BJ (cell line): ENCODE measurements at regions of chr5 and their contacts with region 1.

Region 1: DNA sequence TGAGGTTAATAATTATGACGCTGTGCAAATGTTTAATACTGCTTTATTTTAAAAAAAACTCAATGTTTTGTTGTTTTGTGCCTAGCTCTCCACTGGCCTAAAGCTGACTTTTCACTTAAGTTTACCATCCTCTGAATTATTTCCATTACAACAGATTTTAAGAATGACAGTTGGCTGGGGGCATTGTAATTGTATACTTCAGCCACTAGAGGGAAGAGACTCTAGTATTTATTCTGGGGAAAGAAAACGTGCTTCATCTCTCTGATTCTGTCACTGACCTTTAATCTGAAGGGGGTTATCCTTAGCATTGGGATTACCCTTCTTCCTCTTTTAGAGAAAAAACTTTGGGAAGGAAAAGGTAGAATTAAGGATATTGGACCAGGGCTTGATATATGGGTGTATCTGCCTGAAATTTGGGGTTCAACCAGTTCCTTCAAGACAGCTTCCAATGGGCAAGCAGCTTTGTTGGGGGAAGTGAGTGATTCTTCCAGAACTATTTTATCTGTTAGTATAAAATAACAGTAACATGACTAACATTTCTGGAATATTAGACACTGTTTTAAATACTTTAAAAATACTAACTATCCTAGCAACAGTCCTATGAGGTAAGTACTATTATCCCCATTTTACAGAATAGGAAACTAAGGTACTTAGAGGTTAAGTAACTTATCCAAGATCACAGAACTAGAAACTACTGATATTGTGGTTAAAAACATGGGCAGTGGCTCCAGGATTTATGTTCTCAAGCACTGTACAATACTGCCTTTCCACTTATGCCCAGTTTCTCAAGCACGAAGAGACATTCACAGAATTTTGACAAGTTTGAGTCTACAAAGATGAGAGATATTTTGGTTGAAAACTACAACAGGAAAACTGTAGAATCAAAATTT is 208.4 kb downstream of the CD180 start:
- DNase-seq: no peak
- H3K4me3 ChIP-seq: no peak overlapping the region
- H3K27me3 ChIP-seq: no peaks in the 10 kb centered on the region
- CTCF ChIP-seq: peak; percentile 79

Region 2: GRCh38 chr5:66821688-66822429 is 166.3 kb before region 1 on chr5:
- CTCF ChIA-PET with region 1: no interaction called
- POLR2A ChIA-PET with region 1: no interaction called
- DNase-seq: no peak
- H3K4me3 ChIP-seq: no peak overlapping the region
- H3K27me3 ChIP-seq: peaks cover 9% of the 10 kb centered on the region
- CTCF ChIP-seq: no peak

Region 3: DNA sequence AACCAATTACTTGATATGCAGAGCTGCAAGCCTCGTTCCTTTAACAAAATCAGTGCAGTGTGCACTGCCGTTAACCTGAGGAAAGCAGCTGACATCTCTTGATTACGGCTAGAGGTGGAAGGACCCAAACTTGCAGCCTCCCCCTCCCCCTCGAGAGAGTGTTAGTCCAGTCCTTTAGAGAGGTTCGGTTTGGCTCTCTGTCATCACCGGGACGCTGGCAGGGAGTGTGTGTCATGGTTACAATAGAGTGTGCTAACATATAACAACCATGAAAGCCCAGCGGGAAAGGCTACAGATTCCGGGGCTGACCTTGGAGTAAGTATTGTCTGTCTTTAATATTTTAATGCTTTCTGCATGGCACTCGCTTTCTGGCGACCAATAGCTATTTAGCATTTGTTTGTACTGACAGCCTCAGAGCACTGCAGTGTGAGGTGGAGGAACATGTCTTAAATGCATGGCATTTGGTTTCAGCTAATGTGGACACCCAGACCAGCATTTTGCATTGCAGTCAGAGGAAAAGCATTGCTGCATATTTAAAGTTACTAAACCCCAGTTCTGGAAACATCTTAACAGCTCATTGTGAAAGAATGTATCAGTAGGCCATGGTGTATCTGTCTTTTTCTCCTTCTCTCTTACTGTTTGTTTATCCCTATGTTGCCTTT is 29.1 kb before region 1 on chr5:
- CTCF ChIA-PET with region 1: interaction called, 12 read pairs
- POLR2A ChIA-PET with region 1: interaction called, 3 read pairs
- DNase-seq: no peak
- H3K4me3 ChIP-seq: peak overlapping the region; percentile 50
- H3K27me3 ChIP-seq: no peaks in the 10 kb centered on the region
- CTCF ChIP-seq: no peak

Region 4: DNA sequence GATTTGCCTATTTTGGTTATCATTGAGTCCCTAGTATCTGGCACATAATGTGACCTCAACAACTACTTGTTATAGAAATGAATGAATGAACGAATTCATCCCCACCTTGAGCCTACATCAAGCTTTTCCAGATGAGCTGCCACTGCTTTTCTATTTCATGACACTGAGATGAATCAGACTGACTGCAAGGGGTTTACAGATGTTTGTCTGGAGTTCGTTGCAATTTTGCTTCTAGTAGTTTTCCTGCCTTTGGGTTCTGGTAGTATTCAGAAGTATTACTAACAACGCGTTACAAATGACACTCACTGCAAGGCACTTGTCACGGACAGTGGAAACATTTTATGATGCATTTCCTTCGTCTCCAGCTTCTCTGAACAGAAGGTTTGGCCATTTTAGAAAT is 13.9 kb before region 1 on chr5:
- CTCF ChIA-PET with region 1: interaction called, 26 read pairs
- POLR2A ChIA-PET with region 1: no interaction called
- DNase-seq: no peak
- H3K4me3 ChIP-seq: no peak overlapping the region
- H3K27me3 ChIP-seq: no peaks in the 10 kb centered on the region
- CTCF ChIP-seq: no peak

Region 5: GRCh38 chr5:67002812-67003684 is 14.9 kb after region 1 on chr5:
- CTCF ChIA-PET with region 1: interaction called, 12 read pairs
- POLR2A ChIA-PET with region 1: no interaction called
- DNase-seq: no peak
- H3K4me3 ChIP-seq: no peak overlapping the region
- H3K27me3 ChIP-seq: peaks cover 3% of the 10 kb centered on the region
- CTCF ChIP-seq: no peak

Region 6: DNA sequence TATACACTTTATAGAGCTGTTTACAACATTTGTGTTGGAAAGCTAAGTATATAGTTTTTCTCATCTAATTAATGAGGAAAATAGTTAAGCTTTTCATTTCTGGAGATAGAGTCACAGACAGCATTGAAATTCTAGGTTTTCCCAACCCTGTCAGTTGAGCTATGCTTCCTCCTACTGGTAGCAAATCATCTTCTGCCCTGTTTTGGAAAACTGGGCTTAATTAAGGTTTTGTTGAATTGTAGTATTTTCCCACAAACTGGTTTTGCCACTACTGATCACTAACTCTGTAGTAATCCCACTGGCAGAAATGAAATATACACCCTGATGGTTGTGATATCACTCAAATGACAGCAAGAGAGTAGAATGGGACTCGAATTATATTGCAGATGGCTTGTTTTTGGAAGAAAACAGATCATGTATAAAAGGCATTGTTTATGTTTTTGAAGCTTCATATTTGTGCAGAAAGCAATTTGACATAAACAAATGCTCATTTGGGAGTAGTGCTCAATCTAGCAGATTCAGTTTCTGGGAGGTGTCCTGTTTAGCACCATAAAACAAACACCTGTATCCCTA is 161.8 kb after region 1 on chr5:
- CTCF ChIA-PET with region 1: interaction called, 24 read pairs
- POLR2A ChIA-PET with region 1: no interaction called
- DNase-seq: no peak
- H3K4me3 ChIP-seq: no peak overlapping the region
- H3K27me3 ChIP-seq: no peaks in the 10 kb centered on the region
- CTCF ChIP-seq: peak; percentile 68

Region 7: GRCh38 chr5:68149189-68149588 is 1161.0 kb after region 1 on chr5:
- CTCF ChIA-PET with region 1: no interaction called
- POLR2A ChIA-PET with region 1: no interaction called
- DNase-seq: no peak
- H3K4me3 ChIP-seq: no peak overlapping the region
- H3K27me3 ChIP-seq: no peaks in the 10 kb centered on the region
- CTCF ChIP-seq: no peak